Activated CD4-positive, alpha-beta T cell treated with anti-CD3 and anti-CD28 coated beads for 36 hours (primary cell): ENCODE measurements at regions of chr18 and their contacts with region 1.

Region 1: GRCh38 chr18:75478996-75479880 is 51.7 kb upstream of the SMIM21 start:
- DNase-seq: no peak
- ATAC-seq: peak; percentile 68
- H3K4me3 Mint-ChIP-seq: no peak overlapping the region
- H3K27ac Mint-ChIP-seq: no peak overlapping the region
- H3K4me1 Mint-ChIP-seq: no peaks in the 10 kb centered on the region
- H3K27me3 Mint-ChIP-seq: peaks cover 15% of the 10 kb centered on the region

Region 2: DNA sequence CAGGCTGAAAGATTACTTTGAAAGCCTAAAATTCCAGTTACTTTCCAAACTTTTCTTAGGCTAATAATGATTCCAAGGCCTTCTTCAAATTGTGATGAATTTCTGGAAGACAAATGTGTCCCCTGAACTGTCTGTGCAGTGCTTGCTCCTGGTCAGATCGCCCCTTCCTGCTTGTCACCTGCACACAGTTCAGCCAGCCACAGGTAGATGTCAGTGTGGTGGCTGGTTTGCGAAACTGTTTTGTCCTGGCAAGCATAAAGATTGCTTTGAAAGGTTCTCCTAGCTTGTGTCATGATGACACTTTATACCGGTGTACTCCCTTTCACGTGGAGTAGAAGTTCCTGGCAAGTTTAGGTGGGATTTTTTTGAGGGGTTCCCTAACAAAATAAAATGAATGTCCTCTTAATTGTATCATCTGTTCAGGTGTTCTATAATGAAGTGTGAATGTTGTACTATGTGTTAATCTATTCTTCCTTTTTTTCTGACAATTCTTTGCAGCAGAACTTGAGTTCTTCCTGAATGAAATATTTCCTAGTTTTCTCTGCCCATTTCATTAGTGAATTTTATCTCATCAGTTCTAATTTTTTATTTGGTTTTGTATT is 582.7 kb before region 1 on chr18:
- CTCF ChIA-PET with region 1: interaction called, 7 read pairs
- POLR2A ChIA-PET with region 1: no interaction called
- intact Hi-C with region 1: loop called in 1 of 2 experiments (anchors 5 kb)
- DNase-seq: peak; percentile 62
- ATAC-seq: peak; percentile 60
- H3K4me3 Mint-ChIP-seq: no peak overlapping the region
- H3K27ac Mint-ChIP-seq: no peak overlapping the region
- H3K4me1 Mint-ChIP-seq: peaks cover 3% of the 10 kb centered on the region
- H3K27me3 Mint-ChIP-seq: no peaks in the 10 kb centered on the region

Region 3: GRCh38 chr18:75654851-75655751 is 175.9 kb after region 1 on chr18:
- CTCF ChIA-PET with region 1: no interaction called
- POLR2A ChIA-PET with region 1: no interaction called
- intact Hi-C with region 1: no loop called
- DNase-seq: no peak
- ATAC-seq: no peak
- H3K4me3 Mint-ChIP-seq: no peak overlapping the region
- H3K27ac Mint-ChIP-seq: no peak overlapping the region
- H3K4me1 Mint-ChIP-seq: peaks cover 3% of the 10 kb centered on the region
- H3K27me3 Mint-ChIP-seq: peaks cover 15% of the 10 kb centered on the region